HAP-1 (cell line): ENCODE measurements at regions of chr1 and their contacts with region 1.

Region 1: DNA sequence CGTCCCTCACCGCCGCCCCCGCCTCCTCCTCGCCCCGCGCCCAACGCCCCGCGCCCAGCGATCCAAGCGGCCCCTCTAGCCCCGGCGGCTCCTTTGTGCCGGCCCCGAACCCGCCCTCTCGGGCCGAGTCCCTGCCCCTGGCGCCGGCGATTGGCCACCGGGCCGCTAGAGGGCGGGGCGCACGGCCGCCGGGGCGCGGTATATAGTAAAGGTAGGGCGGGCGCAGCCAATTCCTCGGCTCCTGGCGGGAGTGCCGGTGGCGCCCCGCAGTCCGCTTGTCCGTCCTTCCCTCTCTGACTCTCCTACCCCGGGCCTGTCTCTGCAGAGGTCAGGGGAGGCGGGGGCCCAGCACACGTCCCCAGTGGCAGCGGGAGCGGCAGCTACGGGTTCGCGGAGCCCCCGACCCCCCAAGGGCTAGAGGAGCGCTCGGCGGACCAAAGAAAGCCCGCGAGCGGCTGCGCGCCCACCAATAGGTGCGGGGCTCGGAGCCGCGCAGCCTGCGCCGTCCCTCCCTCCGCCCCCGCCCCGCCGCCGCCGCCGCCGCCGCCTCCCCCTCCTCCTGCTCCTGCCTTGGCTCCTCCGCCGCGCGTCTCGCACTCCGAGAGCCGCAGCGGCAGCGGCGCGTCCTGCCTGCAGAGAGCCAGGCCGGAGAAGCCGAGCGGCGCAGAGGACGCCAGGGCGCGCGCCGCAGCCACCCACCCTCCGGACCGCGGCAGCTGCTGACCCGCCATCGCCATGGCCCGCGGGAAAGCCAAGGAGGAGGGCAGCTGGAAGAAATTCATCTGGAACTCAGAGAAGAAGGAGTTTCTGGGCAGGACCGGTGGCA is at the start of gene ATP1B1:
- DNase-seq: peak; percentile 86 to 93
- H3K4me3 ChIP-seq: peak within 1 kb of the TSS; percentile 91
- H3K4me1 ChIP-seq: peaks cover 37% of the 10 kb centered on the region
- H3K27me3 ChIP-seq: no peaks in the 10 kb centered on the region

Region 2: GRCh38 chr1:168603501-168604110 is 502.7 kb before region 1 on chr1:
- in situ Hi-C with region 1: loop called (anchors 25 kb)
- DNase-seq: peak; percentile 32 to 81
- H3K4me3 ChIP-seq: no peak overlapping the region
- H3K4me1 ChIP-seq: no peaks in the 10 kb centered on the region
- H3K27me3 ChIP-seq: peaks cover 3% of the 10 kb centered on the region; the same call in 1 of the 2 replicates

Region 3: GRCh38 chr1:168845140-168845539 is 261.2 kb before region 1 on chr1:
- in situ Hi-C with region 1: no loop called
- DNase-seq: no peak
- H3K4me3 ChIP-seq: no peak overlapping the region
- H3K4me1 ChIP-seq: peaks cover 23% of the 10 kb centered on the region
- H3K27me3 ChIP-seq: no peaks in the 10 kb centered on the region

Region 4: GRCh38 chr1:169024800-169025271 is 81.5 kb before region 1 on chr1:
- in situ Hi-C with region 1: loop called (anchors 25 kb)
- DNase-seq: no peak
- H3K4me3 ChIP-seq: no peak overlapping the region
- H3K4me1 ChIP-seq: no peaks in the 10 kb centered on the region
- H3K27me3 ChIP-seq: no peaks in the 10 kb centered on the region

Region 5: GRCh38 chr1:169367486-169368405 is 261.4 kb after region 1 on chr1 and contains the starts of genes BLZF1 and NME7:
- in situ Hi-C with region 1: loop called (anchors 25 kb)
- DNase-seq: peak; percentile 94 to 98
- H3K4me3 ChIP-seq: peak within 1 kb of the TSS; percentile 78
- H3K4me1 ChIP-seq: no peaks in the 10 kb centered on the region
- H3K27me3 ChIP-seq: no peaks in the 10 kb centered on the region

Region 6: GRCh38 chr1:169383449-169383848 is 277.1 kb after region 1 on chr1:
- in situ Hi-C with region 1: no loop called
- DNase-seq: no peak
- H3K4me3 ChIP-seq: no peak overlapping the region
- H3K4me1 ChIP-seq: peaks cover 3% of the 10 kb centered on the region
- H3K27me3 ChIP-seq: no peaks in the 10 kb centered on the region

Region 7: DNA sequence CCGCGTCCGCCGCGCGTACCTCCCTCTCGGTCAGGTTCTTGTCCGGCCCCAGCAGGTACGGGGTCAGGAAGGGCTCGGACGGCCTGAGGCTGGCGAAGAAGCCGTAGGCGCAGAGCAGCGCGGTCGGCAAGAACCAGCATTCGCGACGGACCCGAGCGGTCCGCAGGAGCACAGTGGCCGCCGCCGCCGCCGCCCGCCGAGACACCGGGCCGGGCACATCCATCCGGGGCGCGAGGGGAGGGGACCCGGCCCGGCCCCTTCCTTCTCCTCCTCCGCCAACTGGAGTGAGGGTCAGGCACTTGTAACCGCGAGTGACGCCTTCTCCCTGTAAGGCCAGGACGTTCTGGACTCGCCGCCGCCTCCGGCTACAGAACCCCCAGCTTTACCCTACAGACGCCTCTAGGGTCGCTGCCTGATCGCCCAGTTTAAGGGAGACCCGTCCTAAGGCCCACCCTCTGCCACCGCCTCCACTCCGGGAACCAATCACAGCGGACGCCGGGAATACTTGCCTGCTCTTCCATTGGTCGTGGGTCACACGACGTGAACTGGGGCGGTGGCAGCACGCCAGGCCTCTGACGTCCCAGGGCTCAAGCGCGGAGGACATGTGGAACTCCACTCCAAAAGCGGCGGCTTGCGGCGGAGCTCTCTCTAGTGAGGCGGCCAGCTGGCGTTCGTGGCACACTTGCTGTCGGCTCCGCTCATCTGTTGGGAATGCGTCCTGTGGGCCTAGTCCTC is 379.4 kb after region 1 on chr1 and contains the start of gene SLC19A2:
- in situ Hi-C with region 1: loop called (anchors 10 kb)
- DNase-seq: peak; percentile 98
- H3K4me3 ChIP-seq: peak within 1 kb of the TSS; percentile 72
- H3K4me1 ChIP-seq: peaks cover 34% of the 10 kb centered on the region
- H3K27me3 ChIP-seq: no peaks in the 10 kb centered on the region